ENCODE measurements at regions of chr16 and their contacts with region 1.

Region 1: DNA sequence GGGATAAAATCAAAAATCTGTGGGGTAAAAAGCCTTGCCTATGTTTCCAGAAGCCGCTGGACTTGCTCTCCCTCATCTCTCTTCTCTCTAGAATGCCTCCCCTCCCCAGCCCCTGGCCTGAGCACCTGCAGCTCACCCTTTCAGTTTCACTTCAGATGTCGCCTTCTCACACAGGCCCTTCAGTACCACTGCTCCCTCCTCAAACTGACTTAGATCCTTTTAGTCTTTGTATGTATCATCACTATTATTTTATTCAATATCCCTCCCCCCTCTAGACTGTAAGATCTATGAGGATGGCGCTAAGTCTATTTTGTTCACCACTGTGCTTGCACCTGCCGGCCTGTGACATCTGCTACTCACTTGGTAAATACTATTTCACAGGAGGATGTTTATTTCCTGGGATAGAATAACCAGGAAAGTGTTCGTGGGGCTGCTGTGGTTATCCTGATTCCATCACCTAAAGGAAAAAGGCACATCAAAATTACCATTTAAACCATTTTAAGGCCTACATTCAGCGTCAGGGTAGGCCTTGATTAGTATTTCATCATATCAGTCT is 122.3 kb downstream of the MRTFB start:
- DNase-seq: no peak
- ATAC-seq: no peak
- H3K4me3 ChIP-seq: no peak overlapping the region
- H3K27ac ChIP-seq: no peak overlapping the region
- H3K4me1 ChIP-seq: no peaks in the 10 kb centered on the region
- H3K27me3 ChIP-seq: no peaks in the 10 kb centered on the region
- CTCF ChIP-seq: no peak

Region 2: GRCh38 chr16:14121142-14121541 is 72.3 kb before region 1 on chr16:
- CTCF ChIA-PET with region 1: no interaction called
- POLR2A ChIA-PET with region 1: interaction called, 11 read pairs
- intact Hi-C with region 1: no loop called
- DNase-seq: no peak
- ATAC-seq: no peak
- H3K4me3 ChIP-seq: no peak overlapping the region
- H3K27ac ChIP-seq: no peak overlapping the region
- H3K4me1 ChIP-seq: peaks cover 6% of the 10 kb centered on the region
- H3K27me3 ChIP-seq: no peaks in the 10 kb centered on the region
- CTCF ChIP-seq: no peak